Activated CD4-positive, alpha-beta memory T cell treated with anti-CD3 and anti-CD28 coated beads for 36 hours (primary cell): ENCODE measurements at regions of chr10 and their contacts with region 1.

Region 1: GRCh38 chr10:30433730-30434272 is at the start of gene MAP3K8:
- DNase-seq: peak; percentile 93
- H3K4me3 Mint-ChIP-seq: peak within 1 kb of the TSS; percentile 92
- H3K27ac Mint-ChIP-seq: peak within 1 kb of the TSS; percentile 95
- H3K4me1 Mint-ChIP-seq: peaks cover 49% of the 10 kb centered on the region
- H3K27me3 Mint-ChIP-seq: no peaks in the 10 kb centered on the region
- total RNA-seq, gene MAP3K8: 36.5 to 40.6 TPM

Region 2: DNA sequence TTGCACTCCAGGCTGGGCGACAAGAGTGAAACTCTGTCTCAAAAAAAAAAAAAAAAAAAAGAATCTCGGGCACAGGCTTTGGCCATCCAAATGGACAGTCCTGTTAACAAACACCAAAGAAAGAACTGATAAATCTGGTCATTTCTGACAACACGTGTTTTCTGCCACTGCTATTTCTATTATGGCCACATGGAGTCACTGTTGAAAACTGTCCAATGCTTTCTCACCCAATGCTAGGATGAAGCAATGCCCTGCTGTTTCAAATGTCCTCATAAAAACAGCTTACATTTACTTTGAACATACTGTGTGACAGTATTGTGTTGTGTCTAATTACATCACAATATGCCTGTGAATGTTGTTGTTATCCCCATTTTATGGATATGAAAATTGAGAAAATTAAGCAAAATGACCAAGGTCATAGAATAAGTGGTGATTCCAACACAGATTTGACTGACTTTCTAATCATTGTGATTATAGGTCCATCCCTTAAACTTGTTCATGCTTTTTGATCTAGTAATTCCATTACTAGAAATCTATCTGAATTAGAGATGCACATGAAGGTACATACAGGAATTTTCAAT is 19.7 kb before region 1 on chr10:
- CTCF ChIA-PET with region 1: interaction called, 18 read pairs
- POLR2A ChIA-PET with region 1: interaction called, 18 read pairs
- intact Hi-C with region 1: loop called (anchors 1 kb)
- DNase-seq: no peak
- H3K4me3 Mint-ChIP-seq: no peak overlapping the region
- H3K27ac Mint-ChIP-seq: no peak overlapping the region
- H3K4me1 Mint-ChIP-seq: peaks cover 17% of the 10 kb centered on the region
- H3K27me3 Mint-ChIP-seq: no peaks in the 10 kb centered on the region

Region 3: GRCh38 chr10:30447125-30447799 is 13.5 kb after region 1 on chr10:
- CTCF ChIA-PET with region 1: interaction called, 9 read pairs
- POLR2A ChIA-PET with region 1: interaction called, 21 read pairs
- intact Hi-C with region 1: loop called (anchors 1 kb)
- DNase-seq: peak; percentile 27
- H3K4me3 Mint-ChIP-seq: no peak overlapping the region
- H3K27ac Mint-ChIP-seq: no peak overlapping the region
- H3K4me1 Mint-ChIP-seq: peaks cover 16% of the 10 kb centered on the region
- H3K27me3 Mint-ChIP-seq: no peaks in the 10 kb centered on the region

Region 4: GRCh38 chr10:30529373-30529998 is 95.7 kb after region 1 on chr10:
- CTCF ChIA-PET with region 1: interaction called, 15 read pairs
- POLR2A ChIA-PET with region 1: interaction called, 20 read pairs
- intact Hi-C with region 1: loop called (anchors 1 kb)
- DNase-seq: peak; percentile 90
- H3K4me3 Mint-ChIP-seq: peak overlapping the region; percentile 76
- H3K27ac Mint-ChIP-seq: peak overlapping the region; percentile 93
- H3K4me1 Mint-ChIP-seq: peaks cover 60% of the 10 kb centered on the region
- H3K27me3 Mint-ChIP-seq: no peaks in the 10 kb centered on the region

Region 5: DNA sequence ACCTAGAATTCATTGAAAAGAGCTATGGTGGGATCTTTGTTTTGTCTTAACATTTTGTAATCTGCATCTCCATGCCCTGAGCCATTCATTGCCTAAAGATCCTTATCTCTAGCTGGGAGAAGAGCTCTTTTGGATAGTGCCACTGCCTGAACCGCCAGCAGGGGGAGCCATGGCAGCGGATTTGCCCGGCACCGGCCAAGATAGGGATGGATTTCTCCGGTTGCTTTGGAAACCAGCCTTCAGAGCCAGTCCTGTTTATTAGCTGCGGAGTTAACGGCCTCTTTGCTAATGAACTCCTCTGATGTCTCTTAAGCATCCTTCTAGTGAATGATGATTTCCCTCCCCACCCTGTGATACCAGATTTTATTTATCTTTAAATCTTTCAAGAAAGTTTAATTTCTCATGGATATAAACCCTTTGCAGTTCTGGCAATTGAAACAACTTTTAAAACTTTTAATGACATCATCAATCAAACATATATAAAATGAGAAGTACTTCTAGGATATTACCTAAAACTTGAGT is 254.0 kb after region 1 on chr10:
- CTCF ChIA-PET with region 1: no interaction called
- POLR2A ChIA-PET with region 1: no interaction called
- intact Hi-C with region 1: loop called (anchors 1 kb)
- DNase-seq: peak; percentile 89
- H3K4me3 Mint-ChIP-seq: no peak overlapping the region
- H3K27ac Mint-ChIP-seq: peak overlapping the region; percentile 78
- H3K4me1 Mint-ChIP-seq: peaks cover 71% of the 10 kb centered on the region
- H3K27me3 Mint-ChIP-seq: peaks cover 7% of the 10 kb centered on the region